ENCODE measurements at regions of chr16 and their contacts with region 1.

Region 1: GRCh38 chr16:14378131-14378551 is 251.9 kb downstream of the PARN start:
- DNase-seq: peak; percentile 81 to 88
- H3K4me3 ChIP-seq: no peak overlapping the region; the same call in 1 of the 2 replicates
- H3K27ac ChIP-seq: peak overlapping the region; percentile 92
- H3K4me1 ChIP-seq: peaks cover 57% of the 10 kb centered on the region
- H3K27me3 ChIP-seq: no peaks in the 10 kb centered on the region
- CTCF ChIP-seq: no peak

Region 2: DNA sequence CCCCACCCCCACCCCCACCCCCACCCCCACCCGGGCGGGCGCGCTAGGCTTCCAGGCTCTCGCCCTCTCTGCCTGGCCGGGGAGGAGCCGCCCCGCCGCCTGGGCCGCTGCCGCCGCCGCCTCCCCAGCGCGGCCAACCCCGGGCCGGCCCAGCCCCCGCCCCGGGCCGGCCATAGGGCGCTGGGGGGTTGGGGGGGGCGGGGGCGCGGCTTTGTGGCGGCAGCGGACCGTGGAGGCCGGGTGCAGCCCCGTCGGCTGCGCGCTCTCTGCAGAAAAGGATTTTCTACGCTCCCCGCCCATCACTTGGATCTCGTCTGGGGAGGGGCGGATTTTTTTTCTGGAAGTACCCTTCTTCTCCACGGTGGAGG is 76.1 kb before region 1 on chr16:
- CTCF ChIA-PET with region 1: no interaction called
- POLR2A ChIA-PET with region 1: no interaction called
- intact Hi-C with region 1: no loop called
- DNase-seq: peak; percentile 65 to 89
- H3K4me3 ChIP-seq: peak overlapping the region; percentile 96
- H3K27ac ChIP-seq: peak overlapping the region; percentile 99
- H3K4me1 ChIP-seq: peaks cover 21% of the 10 kb centered on the region
- H3K27me3 ChIP-seq: no peaks in the 10 kb centered on the region
- CTCF ChIP-seq: no peak

Region 3: GRCh38 chr16:14438256-14438655 is 60.1 kb after region 1 on chr16:
- CTCF ChIA-PET with region 1: no interaction called
- POLR2A ChIA-PET with region 1: interaction called, 32 read pairs
- intact Hi-C with region 1: no loop called
- DNase-seq: no peak
- H3K4me3 ChIP-seq: no peak overlapping the region
- H3K27ac ChIP-seq: no peak overlapping the region
- H3K4me1 ChIP-seq: no peaks in the 10 kb centered on the region
- H3K27me3 ChIP-seq: no peaks in the 10 kb centered on the region
- CTCF ChIP-seq: no peak

Measured in PC-9 (cell line).